B cell (primary cell): ENCODE measurements at regions of chr19 and their contacts with region 1.

Region 1: DNA sequence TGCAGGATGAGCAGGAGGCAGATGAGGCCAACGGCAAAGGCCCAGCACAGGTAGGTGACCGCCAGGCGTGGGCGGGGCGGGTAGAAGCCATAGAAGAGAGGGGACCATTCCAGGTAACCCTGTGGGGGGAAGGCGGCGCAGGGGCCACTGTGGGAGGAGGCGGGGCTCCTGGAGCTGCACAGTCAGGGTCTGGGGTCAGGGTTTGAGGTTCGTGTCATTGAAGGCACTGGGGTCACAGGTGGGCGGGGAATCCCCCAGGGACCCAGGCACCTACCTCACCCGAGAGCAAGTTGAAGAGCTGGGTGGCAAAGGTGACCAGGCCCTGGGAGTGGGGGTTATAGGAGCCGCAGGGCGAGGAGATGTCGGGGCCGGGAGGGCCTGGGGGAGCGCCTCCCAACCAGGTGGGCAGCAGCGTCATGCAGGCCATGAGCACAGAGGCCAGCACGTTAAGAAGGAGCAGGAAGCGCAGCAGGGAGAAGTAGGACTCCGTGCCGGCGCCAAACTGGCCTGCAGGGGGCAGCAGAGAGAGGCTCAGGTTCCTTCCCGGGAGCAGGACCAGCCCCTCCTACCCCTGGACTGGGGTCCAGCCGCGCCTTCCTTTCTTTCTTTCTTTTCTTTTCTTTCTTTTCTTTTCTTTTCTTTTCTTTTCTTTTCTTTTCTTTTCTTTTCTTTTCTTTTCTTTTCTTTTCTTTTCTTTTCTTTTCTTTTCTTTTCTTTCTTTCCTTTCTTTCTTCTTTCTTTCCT is 4.6 kb downstream of the TMC4 start:
- DNase-seq: peak; percentile 89
- ATAC-seq: peak; percentile 89
- H3K4me3 ChIP-seq: no peak overlapping the region
- H3K4me3 Mint-ChIP-seq: no peak overlapping the region
- H3K27ac ChIP-seq: no peak overlapping the region
- H3K27ac Mint-ChIP-seq: no peak overlapping the region
- H3K4me1 ChIP-seq: peaks cover 18 to 22% of the 10 kb centered on the region in 2 donors
- H3K4me1 Mint-ChIP-seq: peaks cover 24% of the 10 kb centered on the region
- H3K27me3 ChIP-seq: peaks cover 0 to 23% (median 13%) of the 10 kb centered on the region in 4 experiments
- H3K27me3 Mint-ChIP-seq: peaks cover 16% of the 10 kb centered on the region
- CTCF ChIP-seq: peak; percentile 89

Region 2: DNA sequence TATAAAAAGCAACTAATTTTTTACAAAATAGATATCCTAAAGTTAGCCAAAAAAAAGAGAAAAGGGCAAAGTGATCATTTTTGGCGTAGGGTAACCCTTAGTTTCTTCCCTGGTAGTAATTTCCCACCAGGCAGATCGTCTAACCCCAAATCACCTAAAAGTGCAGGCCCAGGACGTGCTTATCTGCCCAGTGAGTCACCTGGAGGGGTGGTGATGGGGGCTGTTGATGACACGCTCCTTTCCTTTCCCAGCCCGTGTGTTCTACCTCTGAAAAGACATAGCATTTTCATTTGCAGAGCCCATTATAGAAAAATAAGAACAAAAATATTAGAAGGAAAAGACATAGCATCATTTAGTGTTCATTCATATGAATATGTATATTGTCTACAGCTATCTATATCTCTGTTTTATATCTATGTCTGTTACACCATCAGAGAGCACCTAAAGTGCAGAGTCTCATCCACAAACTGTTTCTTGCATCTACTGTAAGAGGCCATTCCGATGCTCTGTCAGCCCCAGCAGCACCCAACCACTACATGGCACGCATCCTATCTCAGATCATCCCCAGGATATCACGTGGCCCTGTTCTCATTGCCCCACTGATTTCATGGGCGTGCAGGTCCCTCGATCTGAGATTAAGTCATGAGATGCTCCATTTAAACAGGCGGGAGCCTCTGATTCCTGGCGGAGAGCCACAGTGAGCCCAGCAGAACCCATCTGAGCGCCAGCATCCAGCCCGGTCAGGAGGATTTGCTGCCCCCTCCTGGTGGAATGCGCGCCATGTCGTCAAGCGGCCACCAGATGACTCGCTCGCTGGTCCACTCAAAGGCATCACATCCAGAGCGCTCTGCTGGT is 63.0 kb after region 1 on chr19:
- CTCF ChIA-PET with region 1: interaction called, 14 read pairs
- POLR2A ChIA-PET with region 1: no interaction called
- intact Hi-C with region 1: loop called (anchors 1 kb)
- DNase-seq: peak; percentile 88
- ATAC-seq: peak; percentile 87
- H3K4me3 ChIP-seq: no peak overlapping the region
- H3K4me3 Mint-ChIP-seq: no peak overlapping the region
- H3K27ac ChIP-seq: no peak overlapping the region
- H3K27ac Mint-ChIP-seq: no peak overlapping the region
- H3K4me1 ChIP-seq: peaks cover 4 to 7% of the 10 kb centered on the region in 2 donors
- H3K4me1 Mint-ChIP-seq: peaks cover 3% of the 10 kb centered on the region
- H3K27me3 ChIP-seq: peaks cover 0 to 64% (median 16%) of the 10 kb centered on the region in 4 experiments
- H3K27me3 Mint-ChIP-seq: peaks cover 40% of the 10 kb centered on the region
- CTCF ChIP-seq: peak; percentile 91

Region 3: GRCh38 chr19:54281007-54281728 is 112.8 kb after region 1 on chr19 and contains the start of gene LILRB2:
- CTCF ChIA-PET with region 1: no interaction called
- POLR2A ChIA-PET with region 1: no interaction called
- intact Hi-C with region 1: no loop called
- DNase-seq: peak; percentile 59
- ATAC-seq: peak; percentile 7
- H3K4me3 ChIP-seq: peak within 1 kb of the TSS; percentile 2 to 50 (median 13)
- H3K4me3 Mint-ChIP-seq: peak within 1 kb of the TSS; percentile 89
- H3K27ac ChIP-seq: no peak within 1 kb of the TSS
- H3K27ac Mint-ChIP-seq: peak within 1 kb of the TSS; percentile 79
- H3K4me1 ChIP-seq: peaks cover 62 to 64% of the 10 kb centered on the region in 2 donors
- H3K4me1 Mint-ChIP-seq: peaks cover 65% of the 10 kb centered on the region
- H3K27me3 ChIP-seq: peaks cover 0 to 23% (median 3%) of the 10 kb centered on the region in 4 experiments
- H3K27me3 Mint-ChIP-seq: peaks cover 5% of the 10 kb centered on the region
- CTCF ChIP-seq: no peak
- total RNA-seq, gene LILRB2: 8.3 and 9.2 TPM in 2 replicates